Left ventricle myocardium superior (tissue), 1 donor: ENCODE measurements at regions of chr2 and their contacts with region 1.

Region 1: GRCh38 chr2:144519934-144520731 is at the start of gene ZEB2:
- DNase-seq: peak; percentile 55
- ATAC-seq: peak; percentile 31
- total RNA-seq, gene ZEB2: 83.2 TPM

Region 2: DNA sequence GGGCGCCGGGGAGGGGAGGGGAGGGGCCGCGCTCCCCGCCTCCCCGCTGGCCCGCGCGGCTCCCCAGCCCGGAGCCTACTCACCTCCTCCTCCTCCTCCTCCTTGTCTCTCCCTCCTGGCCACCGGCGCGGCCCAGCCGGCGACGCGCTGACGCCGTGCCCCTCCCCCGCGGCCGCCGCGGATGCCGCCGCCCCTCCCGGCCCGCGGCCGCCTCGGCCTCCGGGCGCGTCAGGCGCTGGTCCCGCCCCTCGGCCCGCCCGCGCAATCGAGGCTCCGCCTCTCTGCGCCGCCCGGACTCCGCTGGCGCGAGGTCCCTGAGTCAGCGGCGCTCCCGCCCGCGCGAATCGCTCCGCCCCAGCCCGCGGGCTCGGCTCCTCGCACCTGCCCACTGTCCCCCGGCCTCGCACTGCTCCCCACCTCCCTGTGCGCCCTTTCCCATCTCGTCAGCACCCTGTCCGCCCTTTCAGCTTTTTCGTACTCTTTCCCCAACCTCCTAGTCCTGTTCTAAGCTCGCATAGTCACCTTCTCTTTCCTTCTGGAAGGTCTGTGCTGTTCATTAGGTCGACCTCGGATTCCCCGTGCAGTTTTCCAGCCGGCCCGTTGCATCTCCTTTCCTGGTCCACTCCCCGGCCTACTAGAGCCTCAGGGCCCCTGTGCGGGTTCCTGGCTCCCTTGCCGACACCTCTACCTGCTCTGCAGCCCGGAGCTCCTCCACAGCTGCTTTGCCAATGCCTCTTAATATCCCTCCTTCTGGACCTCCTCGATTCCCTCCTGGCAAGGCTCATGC is 187.6 kb before region 1 on chr2:
- intact Hi-C with region 1: loop called (anchors 10 kb)
- DNase-seq: peak; percentile 93
- ATAC-seq: peak; percentile 94

Region 3: GRCh38 chr2:144671695-144672455 is 151.7 kb after region 1 on chr2:
- intact Hi-C with region 1: no loop called
- DNase-seq: no peak
- ATAC-seq: peak; percentile 73